Adrenal gland (tissue), 19 donors: ENCODE measurements at regions of chr7 and their contacts with region 1.

Region 1: DNA sequence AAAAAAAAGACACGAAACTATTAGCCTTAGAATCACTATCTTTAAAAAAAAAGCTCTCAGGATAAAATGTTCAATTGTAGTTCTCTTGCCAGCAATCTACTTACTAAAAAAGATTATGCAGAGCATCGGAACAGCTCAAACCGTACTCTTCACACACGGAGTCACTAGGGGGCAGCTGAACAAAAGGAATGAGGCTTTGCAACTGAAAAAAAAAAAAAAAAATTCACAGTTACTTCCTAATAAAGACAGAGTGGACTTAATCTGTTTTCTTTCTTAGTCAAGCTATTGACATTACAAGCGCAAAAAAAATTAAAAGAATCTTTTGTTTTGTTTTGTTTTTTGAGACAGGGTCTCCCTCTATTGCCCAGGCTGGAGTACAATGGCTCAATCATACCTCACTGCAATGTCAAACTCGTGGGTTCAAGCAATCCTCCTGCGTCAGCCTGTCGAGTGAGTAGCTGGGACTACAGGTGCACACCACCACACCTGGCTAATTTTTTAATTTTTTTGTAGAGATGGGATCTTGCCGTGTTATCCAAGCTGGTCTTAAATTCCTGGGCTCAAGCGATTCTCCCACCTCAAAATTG is 11.5 kb downstream of the PMS2 start:
- DNase-seq: peak; percentile 56 to 81 (median 67)
- H3K4me3 ChIP-seq: no peak overlapping the region
- H3K27ac ChIP-seq: no peak overlapping the region
- H3K4me1 ChIP-seq: no peaks in the 10 kb centered on the region
- H3K27me3 ChIP-seq: no peaks in the 10 kb centered on the region
- CTCF ChIP-seq: peak; percentile 41 to 83 (median 62)
- POLR2A ChIP-seq: no peak

Region 2: DNA sequence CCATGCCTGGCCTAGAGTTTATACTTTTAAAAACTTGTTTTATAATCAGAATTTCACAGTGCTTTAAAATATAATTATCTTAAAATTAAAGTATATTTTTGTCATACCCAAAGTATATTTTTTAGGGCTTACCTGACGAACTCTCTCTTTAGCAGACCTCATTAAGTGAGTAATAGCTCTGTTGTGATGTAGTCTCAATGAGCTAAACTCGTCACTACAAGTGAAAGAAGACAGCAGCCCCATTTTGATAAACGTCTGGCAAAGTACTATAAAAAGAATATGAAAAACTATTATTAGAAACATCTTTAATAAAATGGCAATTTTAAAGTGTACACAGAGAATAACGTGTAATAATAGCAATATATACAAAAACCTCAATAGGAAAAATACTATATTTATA is 52.5 kb after region 1 on chr7:
- intact Hi-C with region 1: loop called in 1 of 2 experiments (anchors 10 kb)
- DNase-seq: no peak
- H3K4me3 ChIP-seq: no peak overlapping the region
- H3K27ac ChIP-seq: no peak overlapping the region
- H3K4me1 ChIP-seq: no peaks in the 10 kb centered on the region
- H3K27me3 ChIP-seq: no peaks in the 10 kb centered on the region
- CTCF ChIP-seq: no peak
- POLR2A ChIP-seq: no peak